CD8-positive, alpha-beta T cell (primary cell): ENCODE measurements at regions of chr12 and their contacts with region 1.

Region 1: GRCh38 chr12:45728630-45729232 is 775 bp upstream of the ARID2 start:
- DNase-seq: peak; percentile 93 to 98 (median 97)
- ATAC-seq: peak; percentile 76
- H3K4me3 ChIP-seq: peak overlapping the region; percentile 85 to 90
- H3K4me3 Mint-ChIP-seq: peak overlapping the region; percentile 96
- H3K27ac ChIP-seq: peak overlapping the region; percentile 90 to 96
- H3K27ac Mint-ChIP-seq: peak overlapping the region; percentile 97
- H3K4me1 ChIP-seq: peaks cover 20% of the 10 kb centered on the region
- H3K4me1 Mint-ChIP-seq: peaks cover 26% of the 10 kb centered on the region
- H3K27me3 ChIP-seq: no peaks in the 10 kb centered on the region
- H3K27me3 Mint-ChIP-seq: no peaks in the 10 kb centered on the region
- CTCF ChIP-seq: peak; percentile 90

Region 2: DNA sequence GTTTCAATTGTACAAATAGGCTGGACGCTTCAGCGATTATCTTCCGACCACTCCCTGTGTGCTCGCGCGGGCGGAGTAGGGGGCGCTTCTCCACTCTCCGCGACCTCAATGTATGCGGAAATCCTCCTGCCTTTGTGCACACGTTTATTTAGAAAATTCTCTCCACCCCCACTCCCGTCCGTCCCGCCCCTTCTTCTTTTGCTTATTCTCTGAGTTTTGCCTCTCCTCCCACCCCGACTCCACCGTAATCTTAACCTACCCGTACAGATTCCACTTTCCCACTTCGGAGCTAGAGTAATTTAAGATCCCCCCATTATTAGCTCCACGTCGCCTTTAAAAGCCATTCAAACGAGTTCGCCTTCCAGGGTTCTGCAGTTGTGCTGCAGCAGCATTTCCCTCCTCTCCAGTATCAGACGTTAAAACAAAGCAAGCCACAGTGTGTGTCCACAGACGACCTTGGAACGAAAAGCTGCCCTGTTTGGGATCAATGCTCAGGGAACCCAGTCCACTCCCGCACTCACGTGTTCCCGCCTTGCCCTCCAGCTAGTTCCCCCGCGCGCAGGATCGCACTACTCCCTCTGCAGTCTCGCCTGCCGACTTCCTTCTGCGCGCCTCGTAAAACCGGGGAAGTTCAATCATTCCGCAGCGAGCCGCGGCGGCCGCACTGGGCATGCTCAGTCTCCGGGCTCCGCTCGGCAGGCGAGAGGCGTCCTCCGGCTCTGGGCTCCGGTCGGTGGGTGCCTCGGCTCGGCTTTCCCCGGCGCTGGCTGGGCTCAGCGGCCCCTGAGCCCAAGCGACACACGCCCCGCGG is 513.1 kb before region 1 on chr12 and contains the start of gene ANO6:
- CTCF ChIA-PET with region 1: no interaction called
- POLR2A ChIA-PET with region 1: no interaction called
- intact Hi-C with region 1: loop called (anchors 1 to 10 kb)
- DNase-seq: peak; percentile 37 to 87 (median 72)
- ATAC-seq: peak; percentile 74
- H3K4me3 ChIP-seq: peak within 1 kb of the TSS; percentile 79 to 89
- H3K4me3 Mint-ChIP-seq: peak within 1 kb of the TSS; percentile 94
- H3K27ac ChIP-seq: peak within 1 kb of the TSS; percentile 51 to 78
- H3K27ac Mint-ChIP-seq: peak within 1 kb of the TSS; percentile 92
- H3K4me1 ChIP-seq: peaks cover 24% of the 10 kb centered on the region
- H3K4me1 Mint-ChIP-seq: peaks cover 45% of the 10 kb centered on the region
- H3K27me3 ChIP-seq: no peaks in the 10 kb centered on the region
- H3K27me3 Mint-ChIP-seq: no peaks in the 10 kb centered on the region
- CTCF ChIP-seq: no peak
- total RNA-seq, gene ANO6: 7.4 to 7.5 TPM

Region 3: GRCh38 chr12:45518291-45519235 is 210.2 kb before region 1 on chr12:
- CTCF ChIA-PET with region 1: no interaction called
- POLR2A ChIA-PET with region 1: no interaction called
- intact Hi-C with region 1: no loop called
- DNase-seq: peak; percentile 1 to 84 (median 47)
- ATAC-seq: peak; percentile 96
- H3K4me3 ChIP-seq: no peak overlapping the region
- H3K4me3 Mint-ChIP-seq: peak overlapping the region; percentile 33
- H3K27ac ChIP-seq: peak overlapping the region in 1 of 2 experiments; percentile 41
- H3K27ac Mint-ChIP-seq: peak overlapping the region; percentile 84
- H3K4me1 ChIP-seq: peaks cover 11% of the 10 kb centered on the region
- H3K4me1 Mint-ChIP-seq: peaks cover 17% of the 10 kb centered on the region
- H3K27me3 ChIP-seq: no peaks in the 10 kb centered on the region
- H3K27me3 Mint-ChIP-seq: no peaks in the 10 kb centered on the region
- CTCF ChIP-seq: no peak

Region 4: DNA sequence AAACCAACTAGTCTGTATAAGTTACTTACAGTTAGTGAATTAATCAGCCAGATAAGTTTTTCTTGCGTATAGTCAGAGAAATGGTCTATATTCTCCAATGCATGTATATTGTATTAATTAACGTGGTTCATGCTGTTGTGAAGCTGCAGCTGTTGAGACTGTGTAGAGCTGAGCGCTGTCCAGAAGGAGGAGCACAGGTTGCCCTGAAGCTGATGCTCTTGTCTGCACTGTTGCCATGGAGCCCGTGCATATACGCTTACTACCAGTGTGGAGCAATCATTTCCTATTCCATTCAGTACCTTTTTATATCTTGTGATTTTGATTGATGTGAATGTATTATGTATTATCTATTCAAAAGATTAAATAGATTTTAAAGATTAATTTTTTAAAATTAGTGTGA is 73.5 kb before region 1 on chr12:
- CTCF ChIA-PET with region 1: interaction called, 20 read pairs
- POLR2A ChIA-PET with region 1: no interaction called
- intact Hi-C with region 1: loop called (anchors 1 to 2 kb)
- DNase-seq: peak; percentile 28 to 86 (median 63)
- ATAC-seq: peak; percentile 100
- H3K4me3 ChIP-seq: no peak overlapping the region
- H3K4me3 Mint-ChIP-seq: no peak overlapping the region
- H3K27ac ChIP-seq: no peak overlapping the region
- H3K27ac Mint-ChIP-seq: no peak overlapping the region
- H3K4me1 ChIP-seq: no peaks in the 10 kb centered on the region
- H3K4me1 Mint-ChIP-seq: peaks cover 5% of the 10 kb centered on the region
- H3K27me3 ChIP-seq: peaks cover 0 to 2% of the 10 kb centered on the region in 2 experiments
- H3K27me3 Mint-ChIP-seq: no peaks in the 10 kb centered on the region
- CTCF ChIP-seq: peak; percentile 52

Region 5: GRCh38 chr12:45713078-45713477 is 15.7 kb before region 1 on chr12:
- CTCF ChIA-PET with region 1: interaction called, 9 read pairs
- POLR2A ChIA-PET with region 1: interaction called, 3 read pairs
- intact Hi-C with region 1: loop called in 1 of 2 experiments (anchors 2 kb)
- DNase-seq: no peak
- ATAC-seq: no peak
- H3K4me3 ChIP-seq: no peak overlapping the region
- H3K4me3 Mint-ChIP-seq: no peak overlapping the region
- H3K27ac ChIP-seq: no peak overlapping the region
- H3K27ac Mint-ChIP-seq: no peak overlapping the region
- H3K4me1 ChIP-seq: no peaks in the 10 kb centered on the region
- H3K4me1 Mint-ChIP-seq: peaks cover 21% of the 10 kb centered on the region
- H3K27me3 ChIP-seq: no peaks in the 10 kb centered on the region
- H3K27me3 Mint-ChIP-seq: no peaks in the 10 kb centered on the region
- CTCF ChIP-seq: no peak

Region 6: GRCh38 chr12:45833401-45833800 is 104.7 kb after region 1 on chr12:
- CTCF ChIA-PET with region 1: no interaction called
- POLR2A ChIA-PET with region 1: no interaction called
- intact Hi-C with region 1: loop called in 1 of 2 experiments (anchors 10 kb)
- DNase-seq: no peak
- ATAC-seq: no peak
- H3K4me3 ChIP-seq: no peak overlapping the region
- H3K4me3 Mint-ChIP-seq: no peak overlapping the region
- H3K27ac ChIP-seq: no peak overlapping the region
- H3K27ac Mint-ChIP-seq: no peak overlapping the region
- H3K4me1 ChIP-seq: no peaks in the 10 kb centered on the region
- H3K4me1 Mint-ChIP-seq: peaks cover 7% of the 10 kb centered on the region
- H3K27me3 ChIP-seq: no peaks in the 10 kb centered on the region
- H3K27me3 Mint-ChIP-seq: no peaks in the 10 kb centered on the region
- CTCF ChIP-seq: no peak

Region 7: GRCh38 chr12:47705566-47706425 is 1977.1 kb after region 1 on chr12 and contains the start of gene RPAP3:
- CTCF ChIA-PET with region 1: no interaction called
- POLR2A ChIA-PET with region 1: no interaction called
- intact Hi-C with region 1: loop called in 1 of 2 experiments (anchors 5 kb)
- DNase-seq: peak; percentile 92 to 98 (median 97)
- ATAC-seq: peak; percentile 95
- H3K4me3 ChIP-seq: peak within 1 kb of the TSS; percentile 63 to 73
- H3K4me3 Mint-ChIP-seq: peak within 1 kb of the TSS; percentile 91
- H3K27ac ChIP-seq: peak within 1 kb of the TSS; percentile 67 to 88
- H3K27ac Mint-ChIP-seq: peak within 1 kb of the TSS; percentile 96
- H3K4me1 ChIP-seq: peaks cover 48% of the 10 kb centered on the region
- H3K4me1 Mint-ChIP-seq: peaks cover 64% of the 10 kb centered on the region
- H3K27me3 ChIP-seq: no peaks in the 10 kb centered on the region
- H3K27me3 Mint-ChIP-seq: no peaks in the 10 kb centered on the region
- CTCF ChIP-seq: peak; percentile 77
- total RNA-seq, gene RPAP3: 17.3 to 18.3 TPM